Dorsolateral prefrontal cortex (tissue), 120 donors: ENCODE measurements at regions of chr2 and their contacts with region 1.

Region 1: GRCh38 chr2:230712443-230713330 is at the start of gene CAB39:
- DNase-seq: peak; percentile 68 to 94 (median 82)
- H3K4me3 ChIP-seq: peak within 1 kb of the TSS; percentile 66 to 99 (median 93)
- H3K27ac ChIP-seq: peak within 1 kb of the TSS; percentile 3 to 95 (median 86)
- H3K27me3 ChIP-seq: no peaks in the 10 kb centered on the region
- CTCF ChIP-seq: peak; percentile 53 to 98 (median 88)
- total RNA-seq, gene CAB39: 57.4 to 149 (median 113) TPM

Region 2: GRCh38 chr2:230447455-230448451 is 264.9 kb before region 1 on chr2:
- intact Hi-C with region 1: no loop called
- DNase-seq: no peak
- H3K4me3 ChIP-seq: no peak overlapping the region
- H3K27ac ChIP-seq: peak overlapping the region in 11 of 59 donors; percentile 6 to 59 (median 34)
- H3K27me3 ChIP-seq: no peaks in the 10 kb centered on the region
- CTCF ChIP-seq: no peak

Region 3: GRCh38 chr2:230762317-230762896 is 49.7 kb after region 1 on chr2:
- intact Hi-C with region 1: no loop called
- DNase-seq: no peak
- H3K4me3 ChIP-seq: no peak overlapping the region
- H3K27ac ChIP-seq: no peak overlapping the region
- H3K27me3 ChIP-seq: no peaks in the 10 kb centered on the region
- CTCF ChIP-seq: peak in 5 of 56 donors; percentile 8 to 19 (median 9)

Region 4: DNA sequence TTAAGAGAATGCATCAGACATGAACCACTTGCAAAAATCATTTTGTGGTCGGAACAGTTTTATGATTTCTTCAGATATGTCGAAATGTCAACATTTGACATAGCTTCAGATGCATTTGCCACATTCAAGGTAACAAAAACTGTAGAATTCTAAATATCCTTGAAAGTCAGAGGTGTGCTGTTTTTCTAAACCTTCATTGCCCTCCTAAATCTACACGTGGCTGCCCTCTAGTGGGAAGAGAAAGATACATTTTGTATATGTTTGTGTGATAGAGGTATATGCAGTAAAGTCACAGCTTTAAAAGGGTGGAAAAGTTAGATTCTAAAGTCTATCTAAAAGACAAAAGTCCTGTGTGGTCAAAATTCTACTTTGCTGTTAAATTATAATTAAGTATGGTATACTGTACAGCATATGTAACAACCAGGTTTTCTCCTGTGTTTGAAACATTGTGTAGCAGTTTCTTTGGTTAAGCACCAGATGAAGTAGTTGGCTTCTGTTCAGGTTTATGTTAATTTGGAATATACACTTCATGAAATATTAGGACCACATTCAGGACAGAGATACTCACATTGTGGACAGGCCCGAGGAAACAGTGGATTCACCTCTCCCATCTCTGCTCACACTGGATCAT is 86.2 kb after region 1 on chr2:
- intact Hi-C with region 1: loop called (anchors 5 kb)
- DNase-seq: no peak
- H3K4me3 ChIP-seq: no peak overlapping the region
- H3K27ac ChIP-seq: no peak overlapping the region
- H3K27me3 ChIP-seq: no peaks in the 10 kb centered on the region
- CTCF ChIP-seq: peak; percentile 29 to 70 (median 54)

Region 5: GRCh38 chr2:231056453-231057424 is 344.1 kb after region 1 on chr2 and contains the start of gene PSMD1:
- intact Hi-C with region 1: loop called in 1 of 2 experiments (anchors 10 kb)
- DNase-seq: peak; percentile 82 to 94 (median 90)
- H3K4me3 ChIP-seq: peak within 1 kb of the TSS; percentile 63 to 100 (median 96)
- H3K27ac ChIP-seq: peak within 1 kb of the TSS; percentile 87 to 100 (median 98)
- H3K27me3 ChIP-seq: no peaks in the 10 kb centered on the region
- CTCF ChIP-seq: peak; percentile 86 to 99 (median 95)
- total RNA-seq, gene PSMD1: 86.5 to 175 (median 121) TPM